T-cell (primary cell): ENCODE measurements at regions of chr20 and their contacts with region 1.

Region 1: DNA sequence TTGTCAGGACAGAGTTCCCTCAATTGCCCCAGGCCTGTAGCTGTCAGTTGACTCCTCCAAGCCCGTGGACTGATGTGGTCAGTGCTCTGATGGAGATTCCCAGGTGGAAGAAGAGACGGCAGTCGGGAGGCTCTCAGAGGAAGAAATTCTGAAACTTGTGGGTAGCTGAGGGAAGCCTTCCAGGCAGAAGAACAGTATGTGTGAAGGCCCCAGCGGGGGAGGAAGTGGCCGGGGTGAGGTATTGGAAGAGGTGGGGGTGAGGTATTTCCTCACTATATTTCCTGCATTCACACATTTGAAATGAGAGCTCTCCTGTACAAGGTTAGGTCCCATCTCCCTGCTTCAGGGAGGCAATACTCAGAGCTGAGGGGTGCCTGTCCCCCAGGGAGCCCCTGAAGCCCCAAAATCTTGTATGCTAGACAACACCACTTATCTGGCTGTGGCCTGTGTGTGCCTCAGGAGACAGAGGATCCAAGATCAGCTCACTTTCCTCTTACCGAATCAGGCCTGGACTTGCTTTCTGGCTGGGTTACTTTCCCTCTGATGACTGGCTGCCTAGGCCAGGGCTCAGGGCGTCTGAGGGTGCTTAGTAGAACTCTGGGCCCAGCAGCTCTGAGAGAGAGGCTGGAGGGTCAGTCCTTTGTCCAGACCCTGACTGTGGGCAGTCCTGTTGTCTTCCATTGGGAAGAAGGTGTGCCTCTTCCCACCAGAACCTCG is 49.3 kb upstream of the MYL9 start:
- DNase-seq: peak; percentile 41 to 71 (median 58)
- ATAC-seq: peak; percentile 92 to 99 (median 98)
- H3K4me3 ChIP-seq: peak overlapping the region in 1 of 2 donors; percentile 39
- H3K4me3 Mint-ChIP-seq: peak overlapping the region; percentile 0 to 65 (median 53)
- H3K27ac ChIP-seq: peak overlapping the region; percentile 90
- H3K27ac Mint-ChIP-seq: peak overlapping the region; percentile 89 to 94
- H3K4me1 ChIP-seq: peaks cover 17 to 46% of the 10 kb centered on the region in 2 experiments
- H3K4me1 Mint-ChIP-seq: peaks cover 37 to 61% (median 49%) of the 10 kb centered on the region in 3 donors
- H3K27me3 ChIP-seq: no peaks in the 10 kb centered on the region
- H3K27me3 Mint-ChIP-seq: no peaks in the 10 kb centered on the region

Region 2: GRCh38 chr20:35607003-35607750 is 884.9 kb before region 1 on chr20:
- CTCF ChIA-PET with region 1: no interaction called
- POLR2A ChIA-PET with region 1: interaction called in 1 of 2 experiments, 10 read pairs
- DNase-seq: no peak
- ATAC-seq: no peak
- H3K4me3 ChIP-seq: no peak overlapping the region
- H3K4me3 Mint-ChIP-seq: no peak overlapping the region
- H3K27ac ChIP-seq: no peak overlapping the region
- H3K27ac Mint-ChIP-seq: no peak overlapping the region
- H3K4me1 ChIP-seq: peaks cover 0 to 2% of the 10 kb centered on the region in 2 experiments
- H3K4me1 Mint-ChIP-seq: peaks cover 0 to 4% (median 0%) of the 10 kb centered on the region in 3 donors
- H3K27me3 ChIP-seq: peaks cover 0 to 27% of the 10 kb centered on the region in 2 experiments
- H3K27me3 Mint-ChIP-seq: no peaks in the 10 kb centered on the region

Region 3: GRCh38 chr20:36408219-36408618 is 83.8 kb before region 1 on chr20:
- CTCF ChIA-PET with region 1: interaction called in 1 of 2 experiments, 4 read pairs
- POLR2A ChIA-PET with region 1: interaction called in 1 of 2 experiments, 13 read pairs
- DNase-seq: no peak
- ATAC-seq: no peak
- H3K4me3 ChIP-seq: no peak overlapping the region
- H3K4me3 Mint-ChIP-seq: no peak overlapping the region
- H3K27ac ChIP-seq: no peak overlapping the region
- H3K27ac Mint-ChIP-seq: no peak overlapping the region
- H3K4me1 ChIP-seq: no peaks in the 10 kb centered on the region
- H3K4me1 Mint-ChIP-seq: no peaks in the 10 kb centered on the region
- H3K27me3 ChIP-seq: peaks cover 0 to 18% of the 10 kb centered on the region in 2 experiments
- H3K27me3 Mint-ChIP-seq: peaks cover 10 to 19% of the 10 kb centered on the region in 2 donors

Region 4: GRCh38 chr20:37131486-37131885 is 639.4 kb after region 1 on chr20:
- CTCF ChIA-PET with region 1: no interaction called
- POLR2A ChIA-PET with region 1: no interaction called
- DNase-seq: no peak
- ATAC-seq: no peak
- H3K4me3 ChIP-seq: no peak overlapping the region
- H3K4me3 Mint-ChIP-seq: no peak overlapping the region
- H3K27ac ChIP-seq: no peak overlapping the region
- H3K27ac Mint-ChIP-seq: no peak overlapping the region
- H3K4me1 ChIP-seq: no peaks in the 10 kb centered on the region
- H3K4me1 Mint-ChIP-seq: peaks cover 0 to 4% (median 3%) of the 10 kb centered on the region in 3 donors
- H3K27me3 ChIP-seq: peaks cover 0 to 2% of the 10 kb centered on the region in 2 experiments
- H3K27me3 Mint-ChIP-seq: no peaks in the 10 kb centered on the region